ENCODE measurements at regions of chr6 and their contacts with region 1.

Region 1: DNA sequence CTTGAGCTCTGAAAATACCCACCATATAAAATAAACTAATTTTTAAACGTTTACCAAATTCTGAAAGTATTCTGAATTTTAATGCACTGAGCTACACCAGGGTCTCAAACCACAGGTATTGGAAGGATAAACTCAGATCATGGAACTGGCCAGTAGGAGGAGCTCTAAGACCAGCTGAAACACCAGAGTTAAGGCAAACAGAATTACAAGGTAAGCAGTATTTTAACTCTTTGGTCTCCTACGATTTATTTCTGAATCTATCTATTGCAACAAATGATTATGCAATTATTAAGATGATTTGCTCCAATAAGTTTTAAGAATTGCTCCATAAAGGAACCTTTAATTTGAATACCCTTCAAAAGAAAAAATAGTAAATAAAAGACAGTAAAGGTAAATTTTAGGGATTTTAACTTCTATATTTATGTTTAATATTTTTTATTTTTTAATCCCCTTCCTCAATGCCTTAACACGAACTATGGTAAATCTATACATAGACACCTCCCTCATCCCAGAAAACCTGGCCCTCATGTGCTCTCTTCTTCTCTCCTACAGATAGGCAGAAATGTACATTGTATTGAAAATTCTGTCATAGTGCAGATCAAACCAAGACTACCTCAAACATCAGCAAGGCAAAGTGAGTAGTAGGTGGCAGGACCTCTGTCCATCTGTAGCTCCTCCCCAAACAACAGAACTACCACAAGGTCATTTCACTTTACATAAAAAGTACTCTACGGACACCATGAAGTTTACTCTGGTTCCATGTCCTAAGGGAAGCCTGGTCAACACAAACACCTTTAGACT is 58.4 kb downstream of the SMLR1 start:
- DNase-seq: peak; percentile 40 to 75
- ATAC-seq: peak; percentile 90 to 93
- H3K4me3 ChIP-seq: no peak overlapping the region
- H3K27ac ChIP-seq: no peak overlapping the region
- H3K4me1 ChIP-seq: no peaks in the 10 kb centered on the region
- CTCF ChIP-seq: peak; percentile 87
- EP300 ChIP-seq: no peak
- POLR2A ChIP-seq: no peak
- RAD21 ChIP-seq: peak; percentile 95 to 96

Region 2: DNA sequence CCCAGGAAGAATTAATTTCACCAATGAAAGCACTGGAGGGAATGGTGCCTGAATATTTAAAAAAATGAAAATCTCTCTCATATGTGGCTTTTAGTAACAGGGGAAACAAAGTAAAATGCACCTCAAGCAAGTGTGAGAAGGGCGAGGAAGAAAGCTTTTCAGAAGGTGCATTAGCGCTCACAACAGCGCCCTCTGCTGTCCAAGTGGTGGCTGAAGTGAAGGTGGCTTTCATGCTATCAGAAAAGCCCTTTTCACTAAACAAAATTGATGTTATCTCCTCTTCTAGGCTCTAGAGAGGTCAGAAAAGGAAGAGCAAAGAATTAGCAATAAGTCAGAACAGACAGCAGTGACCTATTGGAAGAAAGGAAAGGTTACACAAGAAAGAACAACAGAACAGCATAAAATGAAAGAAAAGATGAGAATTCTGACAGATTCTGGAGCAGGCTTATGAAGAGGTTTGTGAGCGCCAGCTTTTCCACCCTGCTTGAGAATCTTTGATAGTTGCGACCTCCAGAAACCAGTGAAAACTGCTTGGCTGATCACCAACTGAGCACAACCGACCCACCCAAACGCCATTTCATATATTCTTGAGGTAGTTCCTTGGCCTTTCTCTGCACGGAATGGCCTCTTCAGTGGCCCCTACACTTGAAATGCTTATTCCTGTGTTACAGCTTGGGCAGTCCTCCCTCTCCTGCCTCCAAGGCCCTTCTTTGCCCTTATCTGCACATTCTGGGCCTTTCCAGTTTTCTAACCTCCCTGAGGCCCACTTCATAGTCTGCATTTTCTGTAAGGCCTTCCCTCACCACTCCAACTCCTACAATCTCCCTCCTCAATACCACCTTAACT is 13.1 kb before region 1 on chr6:
- CTCF ChIA-PET with region 1: interaction called, 11 read pairs
- POLR2A ChIA-PET with region 1: no interaction called
- DNase-seq: peak; percentile 11 to 41
- ATAC-seq: peak; percentile 66 to 81; a peak in 4 of 6 replicates
- H3K4me3 ChIP-seq: no peak overlapping the region
- H3K27ac ChIP-seq: no peak overlapping the region
- H3K4me1 ChIP-seq: no peaks in the 10 kb centered on the region
- CTCF ChIP-seq: peak; percentile 76
- EP300 ChIP-seq: no peak
- POLR2A ChIP-seq: no peak
- RAD21 ChIP-seq: peak; percentile 47 to 52

Region 3: DNA sequence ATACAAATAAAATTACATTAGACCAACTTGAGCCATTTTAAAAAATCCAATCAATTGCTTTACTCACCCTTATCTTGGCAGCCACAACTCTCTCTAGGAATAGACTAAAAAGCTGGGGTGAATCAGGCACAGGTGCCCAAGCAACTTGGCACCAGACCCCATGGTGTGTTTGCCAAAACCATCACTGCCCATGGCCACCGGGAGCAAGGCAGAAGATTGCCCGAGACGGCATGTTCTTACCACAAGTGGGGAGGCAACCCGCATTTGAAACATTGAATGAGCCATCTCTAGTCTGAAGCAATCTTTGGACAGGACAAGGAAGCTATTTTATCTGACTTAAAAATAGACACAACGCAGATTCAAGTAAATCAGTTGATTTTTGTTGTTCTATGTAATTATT is 10.7 kb after region 1 on chr6:
- CTCF ChIA-PET with region 1: interaction called, 10 read pairs
- POLR2A ChIA-PET with region 1: interaction called, 3 read pairs
- DNase-seq: no peak
- ATAC-seq: no peak
- H3K4me3 ChIP-seq: no peak overlapping the region
- H3K27ac ChIP-seq: no peak overlapping the region
- H3K4me1 ChIP-seq: peaks cover 7% of the 10 kb centered on the region; the same call in 2 of the 3 replicates
- CTCF ChIP-seq: no peak
- EP300 ChIP-seq: no peak
- POLR2A ChIP-seq: no peak
- RAD21 ChIP-seq: no peak

Region 4: GRCh38 chr6:131116749-131117360 is 231.3 kb after region 1 on chr6:
- CTCF ChIA-PET with region 1: interaction called, 69 read pairs
- POLR2A ChIA-PET with region 1: no interaction called
- DNase-seq: peak; percentile 29 to 53
- ATAC-seq: peak in 1 of 2 experiments; percentile 54; a peak in 2 of 6 replicates
- H3K4me3 ChIP-seq: no peak overlapping the region
- H3K27ac ChIP-seq: no peak overlapping the region
- H3K4me1 ChIP-seq: peaks cover 7% of the 10 kb centered on the region; the same call in 2 of the 3 replicates
- CTCF ChIP-seq: peak; percentile 63
- EP300 ChIP-seq: no peak
- POLR2A ChIP-seq: no peak
- RAD21 ChIP-seq: peak; percentile 76 to 84

Region 5: DNA sequence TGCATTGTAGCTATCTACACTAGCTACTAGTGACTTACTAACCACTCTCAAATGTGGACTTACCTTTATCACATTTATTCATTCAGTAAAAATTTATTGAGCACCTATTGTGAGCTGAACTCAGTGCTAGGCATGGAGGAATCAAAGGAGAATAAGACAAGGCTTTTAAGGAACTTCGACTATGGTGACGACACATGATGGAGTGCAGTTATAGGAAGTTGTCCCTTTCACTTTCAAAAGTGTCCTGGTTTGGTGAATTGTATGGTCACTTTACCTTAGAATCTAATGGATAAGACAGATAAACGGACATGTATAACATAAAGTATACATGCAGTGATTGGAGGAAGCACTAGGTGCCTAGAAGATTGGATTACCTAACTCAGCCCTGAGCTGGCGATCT is 254.0 kb after region 1 on chr6:
- CTCF ChIA-PET with region 1: interaction called, 10 read pairs
- POLR2A ChIA-PET with region 1: interaction called, 3 read pairs
- DNase-seq: no peak
- ATAC-seq: no peak
- H3K4me3 ChIP-seq: no peak overlapping the region
- H3K27ac ChIP-seq: no peak overlapping the region
- H3K4me1 ChIP-seq: peaks cover 6% of the 10 kb centered on the region
- CTCF ChIP-seq: no peak
- EP300 ChIP-seq: no peak
- POLR2A ChIP-seq: no peak
- RAD21 ChIP-seq: no peak

Region 6: DNA sequence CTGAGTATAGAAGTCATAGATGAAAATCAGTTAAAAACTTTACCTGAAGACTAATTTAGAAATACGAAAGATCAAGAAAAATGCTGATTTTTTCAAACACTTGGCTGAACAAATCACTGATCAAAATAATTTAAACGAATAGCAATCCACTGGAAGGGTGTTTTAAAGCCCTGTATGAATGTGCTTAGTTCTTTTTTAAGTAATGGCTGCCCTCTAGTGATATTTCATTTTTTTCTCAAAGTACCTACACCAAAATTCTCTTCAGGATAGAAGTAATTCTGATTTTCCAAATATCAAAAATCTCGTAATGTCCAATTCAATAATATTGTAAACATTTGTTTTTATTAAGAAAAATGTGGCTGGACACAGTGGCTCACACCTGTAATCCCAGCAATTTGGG is 282.2 kb after region 1 on chr6:
- CTCF ChIA-PET with region 1: interaction called, 13 read pairs
- POLR2A ChIA-PET with region 1: no interaction called
- DNase-seq: no peak
- ATAC-seq: no peak
- H3K4me3 ChIP-seq: no peak overlapping the region
- H3K27ac ChIP-seq: no peak overlapping the region
- H3K4me1 ChIP-seq: no peaks in the 10 kb centered on the region
- CTCF ChIP-seq: no peak; the same call in 2 of the 3 replicates
- EP300 ChIP-seq: no peak
- POLR2A ChIP-seq: no peak
- RAD21 ChIP-seq: peak; percentile 38 to 54; a peak in 4 of 5 replicates